ENCODE measurements at regions of chr4 and their contacts with region 1.

Region 1: GRCh38 chr4:140851032-140851636 is 94.9 kb upstream of the TBC1D9 start:
- DNase-seq: peak in 2 of 5 donors; percentile 37 to 52
- ATAC-seq: peak in 3 of 4 donors; percentile 59 to 65 (median 64)
- H3K4me3 ChIP-seq: no peak overlapping the region
- H3K27ac ChIP-seq: no peak overlapping the region
- H3K4me1 ChIP-seq: peaks cover 0 to 5% (median 2%) of the 10 kb centered on the region in 12 donors
- H3K27me3 ChIP-seq: no peaks in the 10 kb centered on the region
- CTCF ChIP-seq: peak; percentile 65 to 90 (median 82)
- POLR2A ChIP-seq: no peak

Region 2: GRCh38 chr4:140427106-140427961 is 423.8 kb before region 1 on chr4 and contains the start of gene CLGN:
- intact Hi-C with region 1: loop called in 2 of 10 experiments (anchors 5 kb)
- DNase-seq: peak; percentile 73 to 89 (median 81)
- ATAC-seq: peak; percentile 84 to 97 (median 94)
- H3K4me3 ChIP-seq: peak within 1 kb of the TSS; percentile 32 to 80 (median 66)
- H3K27ac ChIP-seq: peak within 1 kb of the TSS; percentile 66 to 91 (median 82)
- H3K4me1 ChIP-seq: peaks cover 0 to 21% (median 0%) of the 10 kb centered on the region in 12 donors
- H3K27me3 ChIP-seq: peaks cover 0 to 16% (median 6%) of the 10 kb centered on the region in 9 donors
- CTCF ChIP-seq: peak; percentile 15 to 73 (median 52)
- POLR2A ChIP-seq: peak in 1 of 2 donors; percentile 39
- total RNA-seq, gene CLGN: 52.6 to 86.4 (median 62.7) TPM

Region 3: DNA sequence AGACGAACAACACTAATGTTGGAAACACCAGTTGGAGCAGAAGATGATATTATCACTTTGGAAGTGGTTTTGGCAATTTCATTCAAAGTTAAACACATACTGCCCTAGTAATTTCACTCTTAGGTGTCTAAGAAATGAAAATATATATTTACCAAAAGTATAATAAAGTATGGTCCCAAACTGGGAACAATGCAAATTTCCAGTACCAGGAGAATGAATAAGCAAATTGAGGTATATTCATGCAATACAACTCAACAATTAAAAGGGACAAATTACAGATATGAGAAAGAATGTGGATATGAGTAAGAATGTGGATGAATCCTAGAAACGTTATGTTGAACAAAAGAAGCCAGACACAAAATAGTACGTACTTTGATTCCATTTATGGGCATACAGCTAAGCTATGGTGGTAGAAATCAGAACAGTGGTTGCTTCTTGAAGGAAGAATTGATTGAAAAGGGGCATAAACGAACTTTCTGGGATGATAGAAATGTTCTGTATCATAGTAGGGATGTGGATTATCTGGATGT is 317.1 kb before region 1 on chr4:
- intact Hi-C with region 1: loop called in 4 of 10 experiments (anchors 5 to 10 kb)
- DNase-seq: no peak
- ATAC-seq: no peak
- H3K4me3 ChIP-seq: no peak overlapping the region
- H3K27ac ChIP-seq: no peak overlapping the region
- H3K4me1 ChIP-seq: peaks cover 0 to 9% (median 0%) of the 10 kb centered on the region in 12 donors
- H3K27me3 ChIP-seq: no peaks in the 10 kb centered on the region
- CTCF ChIP-seq: no peak
- POLR2A ChIP-seq: no peak

Region 4: GRCh38 chr4:140579278-140579677 is 271.9 kb before region 1 on chr4:
- intact Hi-C with region 1: no loop called
- DNase-seq: no peak
- ATAC-seq: no peak
- H3K4me3 ChIP-seq: no peak overlapping the region
- H3K27ac ChIP-seq: no peak overlapping the region
- H3K4me1 ChIP-seq: peaks cover 0 to 5% (median 0%) of the 10 kb centered on the region in 12 donors
- H3K27me3 ChIP-seq: peaks cover 0 to 47% (median 11%) of the 10 kb centered on the region in 9 donors
- CTCF ChIP-seq: no peak
- POLR2A ChIP-seq: no peak

Region 5: GRCh38 chr4:140609548-140610425 is 241.3 kb before region 1 on chr4:
- intact Hi-C with region 1: loop called in 2 of 10 experiments (anchors 5 kb)
- DNase-seq: peak in 4 of 5 donors; percentile 28 to 57 (median 42)
- ATAC-seq: peak; percentile 40 to 88 (median 82)
- H3K4me3 ChIP-seq: no peak overlapping the region
- H3K27ac ChIP-seq: peak overlapping the region in 10 of 12 donors; percentile 7 to 50 (median 33)
- H3K4me1 ChIP-seq: peaks cover 0 to 15% (median 0%) of the 10 kb centered on the region in 12 donors
- H3K27me3 ChIP-seq: no peaks in the 10 kb centered on the region
- CTCF ChIP-seq: peak; percentile 34 to 74 (median 64)
- POLR2A ChIP-seq: no peak

Region 6: GRCh38 chr4:141220655-141221605 is 369.8 kb after region 1 on chr4 and contains the start of gene ZNF330:
- intact Hi-C with region 1: loop called in 1 of 10 experiments (anchors 10 kb)
- DNase-seq: peak; percentile 92 to 96 (median 94)
- ATAC-seq: peak; percentile 94 to 97 (median 96)
- H3K4me3 ChIP-seq: peak within 1 kb of the TSS; percentile 66 to 98 (median 83)
- H3K27ac ChIP-seq: peak within 1 kb of the TSS; percentile 89 to 99 (median 94)
- H3K4me1 ChIP-seq: peaks cover 0 to 53% (median 18%) of the 10 kb centered on the region in 12 donors
- H3K27me3 ChIP-seq: no peaks in the 10 kb centered on the region
- CTCF ChIP-seq: peak in 6 of 12 donors; percentile 12 to 43 (median 29)
- POLR2A ChIP-seq: peak; percentile 58 to 93
- total RNA-seq, gene ZNF330: 54.4 to 183 (median 141) TPM